Activated T-helper 2 cell treated with anti-CD3 and anti-CD28 coated beads, Interferon-gamma antibody, Interleukin-2, Interleukin-4, amounts not matched to agents 10 μg/mL and 5 μg/mL and 100 μg/mL, durations not matched to agents 14 hours and 24 hours and 36 hours (primary cell): ENCODE measurements at regions of chr1 and their contacts with region 1.

Region 1: GRCh38 chr1:51284487-51284954 is 45.8 kb downstream of the TTC39A start:
- DNase-seq: no peak
- H3K4me3 Mint-ChIP-seq: no peak overlapping the region
- H3K27ac Mint-ChIP-seq: peak overlapping the region; percentile 84
- H3K4me1 Mint-ChIP-seq: peaks cover 58% of the 10 kb centered on the region
- H3K27me3 Mint-ChIP-seq: no peaks in the 10 kb centered on the region

Region 2: GRCh38 chr1:51214615-51215131 is 69.8 kb before region 1 on chr1:
- intact Hi-C with region 1: loop called (anchors 1 kb)
- DNase-seq: peak; percentile 29
- H3K4me3 Mint-ChIP-seq: peak overlapping the region; percentile 56
- H3K27ac Mint-ChIP-seq: peak overlapping the region; percentile 91
- H3K4me1 Mint-ChIP-seq: peaks cover 38% of the 10 kb centered on the region
- H3K27me3 Mint-ChIP-seq: no peaks in the 10 kb centered on the region

Region 3: GRCh38 chr1:51264451-51264850 is 20.1 kb before region 1 on chr1:
- intact Hi-C with region 1: loop called (anchors 1 kb)
- DNase-seq: no peak
- H3K4me3 Mint-ChIP-seq: no peak overlapping the region
- H3K27ac Mint-ChIP-seq: peak overlapping the region; percentile 2
- H3K4me1 Mint-ChIP-seq: peaks cover 71% of the 10 kb centered on the region
- H3K27me3 Mint-ChIP-seq: no peaks in the 10 kb centered on the region

Region 4: DNA sequence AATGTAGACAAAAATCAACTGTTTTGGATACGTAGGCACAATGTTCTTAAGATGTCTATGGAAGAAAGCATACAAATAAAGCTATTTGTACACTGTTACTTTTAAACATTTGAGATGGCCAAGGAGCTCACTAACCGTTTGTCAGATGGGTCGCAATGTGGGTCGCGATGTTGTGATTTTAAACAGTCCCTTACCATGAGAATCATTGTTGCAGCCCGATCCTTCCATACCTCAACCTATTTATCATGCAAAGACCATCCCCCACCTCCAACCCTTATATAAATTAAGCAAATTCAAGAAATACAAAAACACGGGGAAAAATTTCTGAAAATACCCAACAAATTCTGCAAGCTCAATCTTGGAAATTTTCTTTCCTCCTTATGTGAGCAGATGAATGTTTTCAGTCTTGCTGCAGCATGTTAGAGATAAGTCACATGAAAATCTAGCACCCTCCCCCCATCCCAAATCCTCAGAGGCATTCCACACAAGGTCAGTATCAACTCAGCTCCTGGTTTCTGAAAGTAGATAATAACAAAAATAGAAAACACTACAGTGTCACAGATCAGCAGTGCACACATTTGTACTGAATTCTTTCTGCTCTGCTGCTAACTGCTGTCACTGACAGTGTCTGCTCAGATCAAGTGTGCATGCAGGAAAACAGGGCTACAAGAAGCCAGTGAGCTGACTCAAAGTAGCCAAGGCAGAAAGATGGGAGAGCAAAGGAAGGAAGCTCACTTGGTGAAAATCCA is 138.7 kb after region 1 on chr1:
- intact Hi-C with region 1: no loop called
- DNase-seq: no peak
- H3K4me3 Mint-ChIP-seq: no peak overlapping the region
- H3K27ac Mint-ChIP-seq: no peak overlapping the region
- H3K4me1 Mint-ChIP-seq: peaks cover 3% of the 10 kb centered on the region
- H3K27me3 Mint-ChIP-seq: no peaks in the 10 kb centered on the region

Region 5: GRCh38 chr1:51445351-51446090 is 161.0 kb after region 1 on chr1:
- intact Hi-C with region 1: loop called (anchors 10 kb)
- DNase-seq: no peak
- H3K4me3 Mint-ChIP-seq: no peak overlapping the region
- H3K27ac Mint-ChIP-seq: no peak overlapping the region
- H3K4me1 Mint-ChIP-seq: peaks cover 53% of the 10 kb centered on the region
- H3K27me3 Mint-ChIP-seq: no peaks in the 10 kb centered on the region